PC-3 (cell line): ENCODE measurements at regions of chr9 and their contacts with region 1.

Region 1: DNA sequence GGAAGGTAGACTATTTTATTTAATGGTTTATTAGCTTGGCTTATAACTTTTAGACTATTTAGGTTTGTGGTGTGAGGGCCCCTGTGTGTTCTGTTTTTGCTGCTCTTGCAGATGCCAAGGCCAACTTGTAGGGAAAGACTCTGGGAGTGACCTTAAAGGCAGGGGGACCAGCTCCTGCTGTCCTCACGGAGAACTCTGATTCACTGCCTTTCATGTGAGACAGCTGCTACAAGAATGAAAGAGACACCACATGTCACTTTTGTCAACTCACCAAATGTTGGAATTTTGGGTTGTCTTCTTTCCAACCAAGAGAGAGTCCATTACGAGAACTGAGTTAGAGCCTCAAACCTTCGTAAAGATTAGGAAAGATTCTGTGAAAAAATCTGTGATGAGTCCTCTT is 258.3 kb upstream of the ADAMTSL1 start:
- DNase-seq: no peak
- ATAC-seq: no peak
- H3K4me3 ChIP-seq: no peak overlapping the region
- H3K27ac ChIP-seq: no peak overlapping the region
- H3K4me1 ChIP-seq: no peaks in the 10 kb centered on the region
- H3K27me3 ChIP-seq: no peaks in the 10 kb centered on the region
- CTCF ChIP-seq: no peak

Region 2: GRCh38 chr9:18014556-18014955 is 201.1 kb before region 1 on chr9:
- CTCF ChIA-PET with region 1: no interaction called
- POLR2A ChIA-PET with region 1: no interaction called
- intact Hi-C with region 1: loop called (anchors 10 kb)
- DNase-seq: no peak
- ATAC-seq: no peak
- H3K4me3 ChIP-seq: no peak overlapping the region
- H3K27ac ChIP-seq: no peak overlapping the region
- H3K4me1 ChIP-seq: no peaks in the 10 kb centered on the region
- H3K27me3 ChIP-seq: peaks cover 22% of the 10 kb centered on the region; the same call in 1 of the 2 replicates
- CTCF ChIP-seq: no peak